ENCODE measurements at regions of chr3 and their contacts with region 1.

Region 1: DNA sequence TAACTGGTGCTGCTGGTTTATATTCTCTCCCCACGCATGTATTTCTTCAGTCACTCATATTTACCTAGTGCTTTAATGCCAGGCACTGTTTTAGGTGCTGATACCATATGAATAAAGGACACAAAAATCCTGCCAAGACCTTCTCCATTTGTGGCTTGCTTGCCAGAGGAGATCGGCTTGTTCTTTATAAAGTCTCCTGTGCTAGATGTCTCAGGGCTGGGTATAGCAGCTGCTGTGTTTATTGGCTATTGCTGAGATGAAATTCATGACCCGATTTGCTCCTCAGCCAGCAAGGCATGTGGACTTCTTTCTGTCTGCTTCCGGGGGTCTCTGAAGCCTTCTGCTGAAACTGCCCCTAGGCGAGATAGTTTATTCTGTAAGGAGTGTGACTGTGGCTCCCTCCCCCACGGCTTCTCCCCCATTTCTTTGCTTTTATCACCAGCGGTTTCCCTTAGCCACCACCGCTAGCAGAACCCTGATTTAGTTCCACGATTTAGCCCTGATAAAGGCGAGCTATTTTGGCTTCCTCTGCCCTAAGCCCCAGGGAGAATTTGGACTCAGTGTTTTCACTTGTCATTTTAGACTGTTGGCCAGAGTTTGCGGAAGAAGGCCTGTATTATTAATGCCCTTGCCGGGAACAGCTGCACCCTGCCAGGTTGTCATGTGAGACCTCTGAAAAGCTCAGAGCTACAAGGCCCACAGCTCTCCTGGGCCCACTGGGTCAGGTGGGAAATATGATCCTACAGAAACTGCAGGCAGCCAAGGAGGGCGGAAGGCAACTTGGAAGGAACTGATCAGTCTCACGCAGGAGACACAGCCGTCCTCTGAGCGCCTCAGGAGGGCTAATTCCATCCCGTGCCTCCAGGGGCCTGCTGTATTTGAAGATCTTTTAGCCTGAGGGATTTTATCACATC is 46.8 kb downstream of the ST6GAL1 start:
- DNase-seq: peak; percentile 82

Region 2: DNA sequence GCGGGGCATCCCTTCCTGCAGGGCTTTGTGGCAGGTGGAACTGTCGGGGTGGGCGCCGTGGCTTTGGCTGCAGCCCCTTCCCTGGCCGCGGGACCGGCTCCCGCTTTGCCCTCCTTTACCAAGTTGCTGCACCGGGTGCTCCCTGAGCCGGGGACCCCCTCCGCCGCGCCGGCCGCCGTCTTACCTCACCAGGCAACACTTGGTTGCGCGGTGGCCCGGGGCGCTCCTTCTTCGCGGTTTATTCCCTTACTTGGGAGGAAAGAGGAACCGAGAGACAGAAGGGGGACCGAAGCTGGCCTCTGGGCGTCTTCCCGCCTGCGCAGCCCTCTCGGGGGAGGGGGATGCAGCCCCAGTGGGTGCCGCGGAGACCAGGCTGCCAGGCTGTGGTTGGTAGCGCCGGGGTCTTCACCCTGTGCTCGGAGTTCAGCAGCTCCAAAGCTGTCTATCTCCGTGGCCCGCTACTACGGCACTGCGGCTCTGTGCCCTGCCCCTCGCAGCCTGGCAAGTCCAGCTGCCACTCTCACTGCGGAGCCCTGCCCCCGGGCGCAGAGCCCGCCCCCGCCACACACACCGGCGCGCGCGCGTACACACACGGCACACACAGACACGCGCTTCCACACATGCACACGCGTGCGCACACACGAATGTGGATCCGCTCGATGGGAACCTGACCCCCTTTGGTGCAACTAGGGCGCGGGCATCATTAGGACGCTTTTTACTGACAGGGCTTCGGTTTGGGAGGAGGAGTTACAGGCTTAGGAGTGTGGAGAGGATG is 615.1 kb before region 1 on chr3 and contains the start of gene DGKG:
- intact Hi-C with region 1: no loop called
- DNase-seq: peak; percentile 92
- total RNA-seq, gene DGKG: 48.7 TPM

Region 3: GRCh38 chr3:186938716-186939115 is 38.4 kb before region 1 on chr3:
- intact Hi-C with region 1: loop called (anchors 1 kb)
- DNase-seq: no peak